Mammary epithelial cell (primary cell): ENCODE measurements at regions of chr3 and their contacts with region 1.

Region 1: GRCh38 chr3:97658668-97659285 is 105.8 kb upstream of the ARL6 start:
- DNase-seq: peak; percentile 9
- H3K4me3 ChIP-seq: no peak overlapping the region
- H3K27ac ChIP-seq: no peak overlapping the region
- H3K4me1 ChIP-seq: no peaks in the 10 kb centered on the region
- H3K27me3 ChIP-seq: no peaks in the 10 kb centered on the region
- CTCF ChIP-seq: peak; percentile 66 to 78

Region 2: DNA sequence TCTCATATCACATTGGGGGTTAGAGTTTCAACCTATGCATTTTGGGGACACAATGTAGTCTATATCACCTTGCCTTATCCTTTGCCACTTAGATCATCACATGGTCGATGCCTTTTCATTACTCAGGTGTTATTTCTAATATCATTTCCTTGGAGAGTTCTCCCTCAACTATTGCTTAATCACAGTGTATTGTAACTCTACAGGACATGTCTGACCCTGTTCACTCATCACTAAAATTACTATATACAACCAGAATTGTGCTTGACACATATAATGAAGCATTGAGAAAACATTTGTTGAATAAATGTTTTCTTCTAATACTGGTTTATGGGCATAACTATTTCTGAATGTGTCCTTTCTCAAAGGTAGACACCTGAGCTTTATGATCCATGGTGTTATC is 637.0 kb before region 1 on chr3:
- CTCF ChIA-PET with region 1: no interaction called
- dilution Hi-C with region 1: no loop called
- in situ Hi-C with region 1: no loop called
- intact Hi-C with region 1: loop called (anchors 10 kb)
- DNase-seq: peak; percentile 16
- H3K4me3 ChIP-seq: no peak overlapping the region
- H3K27ac ChIP-seq: no peak overlapping the region
- H3K4me1 ChIP-seq: no peaks in the 10 kb centered on the region
- H3K27me3 ChIP-seq: no peaks in the 10 kb centered on the region
- CTCF ChIP-seq: no peak

Region 3: GRCh38 chr3:97719156-97719821 is 60.5 kb after region 1 on chr3:
- CTCF ChIA-PET with region 1: no interaction called
- dilution Hi-C with region 1: no loop called
- in situ Hi-C with region 1: no loop called
- intact Hi-C with region 1: loop called (anchors 5 kb)
- DNase-seq: peak; percentile 55
- H3K4me3 ChIP-seq: peak overlapping the region in 1 of 3 experiments; percentile 21
- H3K27ac ChIP-seq: no peak overlapping the region
- H3K4me1 ChIP-seq: no peaks in the 10 kb centered on the region
- H3K27me3 ChIP-seq: no peaks in the 10 kb centered on the region
- CTCF ChIP-seq: peak; percentile 96 to 97

Region 4: DNA sequence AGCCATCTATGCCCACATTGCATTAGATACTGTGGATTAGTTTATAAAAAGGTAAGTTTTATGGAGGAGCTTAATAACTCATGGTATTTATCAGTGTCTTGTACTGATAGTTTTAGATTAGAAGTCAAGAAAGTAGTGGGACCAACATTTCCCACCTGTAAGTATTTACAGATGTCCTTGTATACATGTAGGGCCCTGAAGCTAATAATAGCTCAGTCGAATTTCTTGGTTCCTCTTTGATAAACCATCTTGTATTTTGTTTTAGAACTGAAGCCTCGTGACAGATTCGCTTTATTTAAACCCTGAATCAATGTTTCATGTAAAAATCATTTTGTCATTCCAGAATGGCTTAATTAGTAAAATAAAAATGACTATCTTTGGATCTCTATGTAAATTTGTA is 236.4 kb after region 1 on chr3:
- CTCF ChIA-PET with region 1: no interaction called
- dilution Hi-C with region 1: no loop called
- in situ Hi-C with region 1: no loop called
- intact Hi-C with region 1: no loop called
- DNase-seq: no peak
- H3K4me3 ChIP-seq: no peak overlapping the region
- H3K27ac ChIP-seq: no peak overlapping the region
- H3K4me1 ChIP-seq: no peaks in the 10 kb centered on the region
- H3K27me3 ChIP-seq: no peaks in the 10 kb centered on the region
- CTCF ChIP-seq: no peak

Region 5: GRCh38 chr3:98058244-98058960 is 399.6 kb after region 1 on chr3:
- CTCF ChIA-PET with region 1: no interaction called
- dilution Hi-C with region 1: no loop called
- in situ Hi-C with region 1: no loop called
- intact Hi-C with region 1: no loop called
- DNase-seq: no peak
- H3K4me3 ChIP-seq: no peak overlapping the region
- H3K27ac ChIP-seq: no peak overlapping the region
- H3K4me1 ChIP-seq: no peaks in the 10 kb centered on the region
- H3K27me3 ChIP-seq: peaks cover 2% of the 10 kb centered on the region
- CTCF ChIP-seq: no peak